K562 (cell line): ENCODE measurements at regions of chr7 and their contacts with region 1.

Region 1: GRCh38 chr7:94239661-94240234 is 154.9 kb upstream of the COL1A2 start:
- DNase-seq: no peak
- ATAC-seq: no peak
- H3K4me3 ChIP-seq: no peak overlapping the region
- H3K27ac ChIP-seq: no peak overlapping the region
- H3K4me1 ChIP-seq: no peaks in the 10 kb centered on the region
- H3K27me3 ChIP-seq: no peaks in the 10 kb centered on the region
- CTCF ChIP-seq: no peak
- EP300 ChIP-seq: no peak
- POLR2A ChIP-seq: no peak
- RAD21 ChIP-seq: no peak

Region 2: DNA sequence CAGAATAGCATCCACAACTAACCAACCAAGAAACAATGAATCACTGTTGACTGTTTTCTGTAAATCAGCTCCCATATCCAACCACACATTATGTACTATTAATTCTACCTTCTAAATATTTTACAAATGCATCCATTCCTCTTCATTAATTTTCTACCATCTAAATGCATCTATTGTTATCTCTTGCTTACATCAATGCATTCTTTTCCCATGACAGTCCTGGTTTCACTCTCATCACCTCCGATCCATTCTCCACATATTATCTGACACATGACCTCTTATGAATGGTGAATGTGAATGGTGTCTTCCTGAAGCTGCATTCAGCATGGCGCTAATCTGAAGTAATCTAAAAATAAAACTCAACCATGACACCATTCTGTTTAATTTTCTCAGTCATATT is 511.5 kb before region 1 on chr7:
- CTCF ChIA-PET with region 1: no interaction called
- POLR2A ChIA-PET with region 1: no interaction called
- in situ Hi-C with region 1: no loop called
- intact Hi-C with region 1: loop called (anchors 10 kb)
- DNase-seq: no peak
- ATAC-seq: no peak
- H3K4me3 ChIP-seq: no peak overlapping the region
- H3K27ac ChIP-seq: no peak overlapping the region
- H3K4me1 ChIP-seq: no peaks in the 10 kb centered on the region
- H3K27me3 ChIP-seq: no peaks in the 10 kb centered on the region
- CTCF ChIP-seq: no peak
- EP300 ChIP-seq: no peak
- POLR2A ChIP-seq: no peak
- RAD21 ChIP-seq: no peak

Region 3: GRCh38 chr7:94228678-94229077 is 11.1 kb before region 1 on chr7:
- CTCF ChIA-PET with region 1: no interaction called
- POLR2A ChIA-PET with region 1: no interaction called
- in situ Hi-C with region 1: no loop called
- intact Hi-C with region 1: no loop called
- DNase-seq: no peak
- ATAC-seq: no peak
- H3K4me3 ChIP-seq: no peak overlapping the region
- H3K27ac ChIP-seq: no peak overlapping the region
- H3K4me1 ChIP-seq: no peaks in the 10 kb centered on the region
- H3K27me3 ChIP-seq: no peaks in the 10 kb centered on the region
- CTCF ChIP-seq: no peak
- EP300 ChIP-seq: no peak
- POLR2A ChIP-seq: no peak
- RAD21 ChIP-seq: no peak